Common myeloid progenitor, CD34-positive (primary cell): ENCODE measurements at regions of chr22 and their contacts with region 1.

Region 1: DNA sequence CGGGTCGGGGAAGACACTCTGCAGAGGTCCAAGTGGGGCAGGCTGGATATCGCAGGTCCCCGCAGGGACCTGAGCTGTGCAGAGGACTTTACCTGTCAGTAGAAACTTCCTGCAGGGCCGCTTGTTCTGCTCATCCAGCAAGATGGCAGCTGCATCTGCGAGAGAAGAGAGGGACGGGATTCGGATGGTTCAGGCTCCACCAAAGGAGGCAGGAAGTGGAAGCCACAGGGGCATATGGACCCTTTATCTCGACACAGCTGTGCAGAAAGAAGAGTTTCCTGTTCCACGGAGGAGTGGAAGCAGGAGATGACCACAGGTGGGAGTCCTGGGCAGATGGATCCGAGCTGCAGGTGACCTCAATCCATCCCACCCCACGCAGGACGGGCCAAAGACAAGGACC is 22.5 kb downstream of the CABP7 start:
- DNase-seq: peak in 2 of 3 donors; percentile 31 to 47
- H3K4me3 ChIP-seq: no peak overlapping the region
- H3K27ac ChIP-seq: no peak overlapping the region
- H3K4me1 ChIP-seq: peaks cover 0 to 6% (median 1%) of the 10 kb centered on the region in 4 experiments
- H3K27me3 ChIP-seq: no peaks in the 10 kb centered on the region

Region 2: DNA sequence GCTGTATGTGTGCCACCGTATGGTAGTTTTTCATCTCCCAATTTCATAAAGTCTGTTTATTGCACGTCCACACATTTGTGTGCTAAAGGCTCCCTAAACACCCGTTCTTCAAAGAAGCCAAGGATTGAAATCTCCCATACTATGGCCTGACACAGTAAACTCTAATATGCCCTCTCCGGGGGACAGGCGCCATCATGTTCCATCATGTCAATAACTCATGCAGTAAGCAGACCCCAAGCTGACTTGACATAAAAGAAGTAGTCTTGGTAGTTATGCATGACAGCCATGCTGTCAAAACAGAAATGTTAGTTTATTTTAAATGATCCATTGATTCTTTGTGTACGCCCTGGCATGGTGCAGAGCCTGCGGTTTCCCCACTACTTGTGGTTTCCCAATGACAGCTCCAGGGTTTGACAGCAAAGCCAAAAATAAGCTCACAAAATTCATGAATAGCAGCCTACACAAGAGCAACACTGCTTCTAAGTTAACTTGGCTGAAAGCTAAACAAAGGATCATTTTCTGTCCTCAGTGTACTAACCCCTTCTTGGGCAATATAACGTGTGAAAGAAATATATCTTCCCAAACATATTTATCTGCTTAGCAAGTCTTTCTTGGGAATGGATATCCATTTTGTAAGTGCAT is 79.0 kb before region 1 on chr22:
- CTCF ChIA-PET with region 1: no interaction called
- POLR2A ChIA-PET with region 1: no interaction called
- DNase-seq: peak in 2 of 3 donors; percentile 22 to 37
- H3K4me3 ChIP-seq: no peak overlapping the region
- H3K27ac ChIP-seq: no peak overlapping the region
- H3K4me1 ChIP-seq: peaks cover 5 to 13% (median 10%) of the 10 kb centered on the region in 4 experiments
- H3K27me3 ChIP-seq: no peaks in the 10 kb centered on the region

Region 3: DNA sequence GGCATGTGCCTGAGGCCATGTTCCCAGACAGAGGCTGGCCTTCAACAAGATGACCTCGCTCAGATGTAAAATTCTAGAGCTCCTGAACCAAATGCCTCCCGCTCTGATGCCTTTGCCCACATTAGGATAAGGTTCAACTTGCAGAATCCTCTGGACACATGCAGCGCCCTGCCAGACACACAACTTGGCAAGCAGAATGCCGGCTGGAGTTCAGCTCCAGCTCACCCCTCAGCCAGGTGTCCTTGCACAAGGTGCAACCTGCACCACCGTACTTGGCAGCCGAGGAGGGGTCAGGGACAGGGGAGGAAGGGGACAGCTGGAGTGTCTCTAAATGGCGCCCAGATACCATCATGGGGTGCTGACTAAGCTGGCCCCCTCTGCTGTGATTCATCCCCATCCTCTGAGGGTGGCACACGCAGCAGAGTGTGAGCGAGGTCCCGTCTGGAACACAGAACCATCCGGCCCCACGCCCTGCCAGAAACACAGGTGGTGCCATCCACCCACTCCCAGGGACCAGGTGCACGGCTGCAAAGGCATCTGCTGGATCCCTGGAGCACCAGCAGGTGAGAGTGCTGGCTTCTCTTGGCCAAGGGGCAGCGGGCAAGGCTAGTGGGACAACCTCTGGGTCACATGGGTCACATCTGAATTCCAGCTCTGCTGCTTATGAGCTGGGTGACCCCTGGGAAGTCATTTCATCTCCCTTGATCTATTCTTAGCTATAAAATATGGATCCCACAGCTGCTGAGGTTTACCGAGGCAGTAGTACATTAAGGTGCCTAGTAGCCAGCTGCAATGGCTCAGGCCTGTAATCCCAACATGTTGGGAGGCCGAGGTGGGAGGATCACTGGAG is 11.7 kb after region 1 on chr22:
- CTCF ChIA-PET with region 1: interaction called, 13 read pairs
- POLR2A ChIA-PET with region 1: no interaction called
- DNase-seq: no peak
- H3K4me3 ChIP-seq: no peak overlapping the region
- H3K27ac ChIP-seq: no peak overlapping the region
- H3K4me1 ChIP-seq: peaks cover 0 to 14% (median 0%) of the 10 kb centered on the region in 4 experiments
- H3K27me3 ChIP-seq: no peaks in the 10 kb centered on the region

Region 4: GRCh38 chr22:29998627-29999384 is 256.5 kb after region 1 on chr22:
- CTCF ChIA-PET with region 1: no interaction called
- POLR2A ChIA-PET with region 1: no interaction called
- DNase-seq: peak in 2 of 3 donors; percentile 5 to 55
- H3K4me3 ChIP-seq: no peak overlapping the region
- H3K27ac ChIP-seq: no peak overlapping the region
- H3K4me1 ChIP-seq: peaks cover 0 to 6% (median 0%) of the 10 kb centered on the region in 4 experiments
- H3K27me3 ChIP-seq: no peaks in the 10 kb centered on the region